Body of pancreas (tissue), 4 donors: ENCODE measurements at regions of chr16 and their contacts with region 1.

Region 1: DNA sequence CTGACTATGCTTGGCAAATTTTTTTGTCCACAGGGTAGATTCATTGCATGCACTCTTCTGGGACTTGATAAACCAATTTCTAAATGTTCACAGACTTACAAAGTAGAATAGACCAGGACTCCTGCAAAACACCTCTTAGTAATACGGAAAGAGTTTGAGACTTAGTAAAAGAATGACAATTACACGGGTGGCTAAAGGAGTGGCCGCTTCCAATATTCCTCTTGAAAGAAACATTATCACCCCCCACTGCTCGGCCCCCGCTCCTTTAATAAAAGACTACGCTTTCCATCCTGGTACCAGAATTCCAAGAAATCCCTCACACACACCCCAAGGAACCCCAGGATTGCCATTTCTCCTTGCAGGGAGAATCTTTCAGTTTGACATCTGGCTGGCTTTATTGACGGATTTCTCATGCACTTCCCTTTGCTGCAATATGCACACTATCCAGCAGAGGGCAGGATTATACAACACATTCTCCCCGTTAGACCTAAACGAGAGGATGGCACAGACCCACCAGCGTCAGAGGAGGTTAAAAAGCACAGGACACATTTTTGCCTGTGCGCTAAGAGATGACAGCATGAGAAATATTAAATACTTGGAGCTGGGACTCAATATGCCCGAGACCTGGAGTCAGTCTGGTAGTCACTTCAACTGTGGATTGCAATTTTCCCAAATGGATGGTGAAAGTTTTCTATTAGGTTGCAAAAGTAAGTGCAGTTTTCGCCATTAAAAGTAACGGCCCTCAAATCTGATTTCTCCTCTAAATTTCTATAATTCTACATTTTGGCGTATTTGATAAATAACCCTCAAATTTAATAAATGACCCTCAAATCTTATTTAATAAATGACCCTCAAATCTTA is 46.6 kb upstream of the NUDT7 start:
- DNase-seq: peak; percentile 68 to 82 (median 74)
- ATAC-seq: peak; percentile 55
- H3K4me3 ChIP-seq: no peak overlapping the region
- H3K27ac ChIP-seq: no peak overlapping the region
- H3K4me1 ChIP-seq: no peaks in the 10 kb centered on the region
- H3K27me3 ChIP-seq: no peaks in the 10 kb centered on the region
- CTCF ChIP-seq: peak; percentile 68 to 96 (median 93)
- POLR2A ChIP-seq: no peak

Region 2: DNA sequence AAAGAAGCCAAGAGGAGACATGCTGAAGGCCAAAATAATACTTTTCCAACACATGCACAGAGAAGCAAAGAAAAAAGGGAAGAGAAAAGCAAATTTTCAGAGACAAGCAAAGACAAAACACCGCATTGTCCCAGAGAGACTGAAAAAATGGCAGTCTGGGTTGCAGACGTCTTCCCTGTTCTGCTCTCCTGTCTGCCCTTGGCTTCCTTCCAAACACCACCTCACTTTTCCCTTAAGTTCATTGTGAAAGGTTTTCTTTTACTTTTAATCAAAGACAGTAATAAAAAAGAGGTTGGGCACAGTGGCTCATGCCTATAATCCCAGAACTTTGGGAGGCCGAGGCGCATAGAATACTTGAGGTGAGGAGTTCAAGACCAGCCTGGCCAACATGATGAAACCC is 91.5 kb after region 1 on chr16:
- intact Hi-C with region 1: no loop called
- DNase-seq: no peak
- ATAC-seq: no peak
- H3K4me3 ChIP-seq: no peak overlapping the region
- H3K27ac ChIP-seq: no peak overlapping the region
- H3K4me1 ChIP-seq: peaks cover 12% of the 10 kb centered on the region
- H3K27me3 ChIP-seq: no peaks in the 10 kb centered on the region
- CTCF ChIP-seq: no peak
- POLR2A ChIP-seq: no peak

Region 3: DNA sequence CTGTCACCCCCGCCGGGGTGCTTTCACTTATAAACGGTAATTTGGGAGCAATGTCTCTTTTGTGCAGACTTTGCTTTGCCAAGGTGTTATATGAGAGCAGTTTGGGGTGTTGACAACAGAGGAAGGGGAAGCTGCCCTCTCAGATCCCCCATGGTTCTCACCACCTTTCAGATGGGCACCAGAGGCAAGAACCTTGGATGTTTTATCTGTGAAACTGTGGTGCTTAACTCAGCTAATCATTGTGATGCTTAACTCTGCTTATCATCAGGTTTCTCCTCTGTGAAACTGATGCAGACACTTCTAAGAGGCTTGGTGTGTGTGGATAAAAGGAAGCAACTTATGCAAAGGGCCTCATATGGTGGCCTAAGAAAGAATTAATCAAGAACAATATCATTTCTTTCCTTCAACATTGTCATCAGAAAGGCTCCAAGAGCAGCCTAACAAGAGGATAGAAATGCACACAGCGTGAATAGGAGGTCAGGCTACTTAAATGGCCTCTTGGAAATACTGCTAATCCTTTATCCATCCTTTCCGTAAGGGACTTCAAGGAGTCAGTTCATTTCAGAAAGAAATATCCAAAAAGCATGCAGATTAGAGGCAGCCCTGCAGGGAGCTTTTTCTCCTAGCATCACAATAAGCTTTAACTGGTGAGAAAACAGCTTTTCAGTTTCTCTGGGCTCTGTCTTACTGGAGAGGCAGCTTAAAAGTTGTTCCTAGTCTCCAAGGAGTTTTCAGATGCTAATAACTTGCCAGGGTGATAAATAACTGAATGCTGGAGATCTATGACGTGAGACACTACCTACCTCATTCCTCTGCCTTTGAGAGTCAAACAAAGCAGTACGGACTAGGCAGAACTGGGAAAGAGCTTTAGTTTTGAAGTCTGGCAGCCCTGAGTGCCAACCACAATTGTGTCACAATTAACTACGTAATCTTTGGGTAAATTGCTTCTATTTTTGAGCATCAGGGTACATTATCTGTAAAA is 291.7 kb after region 1 on chr16:
- intact Hi-C with region 1: loop called (anchors 5 kb)
- DNase-seq: no peak
- ATAC-seq: no peak
- H3K4me3 ChIP-seq: no peak overlapping the region
- H3K27ac ChIP-seq: no peak overlapping the region
- H3K4me1 ChIP-seq: no peaks in the 10 kb centered on the region
- H3K27me3 ChIP-seq: no peaks in the 10 kb centered on the region
- CTCF ChIP-seq: no peak
- POLR2A ChIP-seq: no peak